GM10248 (cell line): ENCODE measurements at regions of chr6 and their contacts with region 1.

Region 1: GRCh38 chr6:14159090-14159489 is 41.5 kb downstream of the CD83 start:
- DNase-seq: no peak
- CTCF ChIP-seq: no peak

Region 2: DNA sequence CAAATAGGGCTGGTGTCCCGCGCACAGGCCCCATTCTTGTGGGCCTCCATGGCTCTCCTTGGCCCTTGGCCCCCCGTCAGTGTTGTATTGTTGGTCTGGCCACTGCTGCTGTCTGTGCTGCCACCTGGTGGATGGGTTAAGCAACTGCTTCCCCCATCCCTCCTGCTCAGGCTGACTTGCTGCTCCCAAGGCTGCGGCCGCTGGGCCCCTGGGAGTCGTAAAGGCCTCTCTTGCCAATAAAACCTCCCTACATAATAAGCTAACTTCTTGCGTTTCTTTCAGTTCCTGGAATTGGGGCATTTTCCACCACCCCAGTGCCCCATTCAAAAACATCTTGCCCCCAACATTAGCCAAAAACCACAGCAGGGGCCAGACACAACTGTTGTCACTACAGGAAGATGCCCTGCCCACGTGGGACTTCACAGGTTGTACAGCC is 14.4 kb before region 1 on chr6:
- CTCF ChIA-PET with region 1: interaction called, 10 read pairs
- POLR2A ChIA-PET with region 1: no interaction called
- DNase-seq: peak; percentile 87
- CTCF ChIP-seq: peak; percentile 92

Region 3: DNA sequence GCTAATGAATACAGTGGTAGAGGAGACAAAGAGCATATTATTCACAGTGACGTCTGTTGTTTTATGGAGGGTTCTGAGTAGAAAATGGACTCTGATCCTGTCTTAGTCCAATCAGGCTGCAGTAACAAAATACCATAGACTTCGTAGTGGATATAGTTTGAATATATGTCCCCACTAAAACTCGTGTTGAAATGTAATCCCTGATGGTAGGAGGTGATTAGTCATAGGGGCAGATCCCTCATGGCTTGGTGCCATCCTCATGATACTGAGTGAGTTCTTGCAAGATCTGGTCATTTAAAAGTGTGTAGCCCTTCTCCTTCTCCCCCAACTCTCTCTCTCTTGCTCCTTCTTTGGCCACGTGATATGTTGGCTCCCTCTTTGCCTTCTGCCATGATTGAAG is 41.0 kb after region 1 on chr6:
- CTCF ChIA-PET with region 1: no interaction called
- POLR2A ChIA-PET with region 1: no interaction called
- DNase-seq: no peak
- CTCF ChIP-seq: no peak